CD8-positive, alpha-beta memory T cell (primary cell): ENCODE measurements at regions of chr10 and their contacts with region 1.

Region 1: DNA sequence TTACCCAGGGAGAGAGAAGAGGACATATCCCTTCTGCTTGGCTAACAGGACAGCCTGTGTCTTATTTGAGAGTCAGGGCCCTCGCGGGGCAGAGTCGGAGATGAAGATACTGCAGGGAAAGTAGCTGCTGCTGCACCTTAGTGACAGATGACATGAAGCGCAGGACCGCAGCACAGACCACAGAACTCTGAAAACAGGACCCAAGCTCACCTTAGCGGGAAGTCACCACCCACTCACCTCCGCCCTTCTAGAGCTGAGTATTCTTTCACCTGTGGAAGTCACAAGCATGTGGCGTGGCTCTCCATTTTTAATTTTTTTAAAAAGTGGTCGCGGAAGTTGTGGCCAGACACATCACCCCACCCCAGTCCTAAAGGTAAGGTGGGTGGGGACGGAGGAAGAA is 191.4 kb downstream of the FAM107B start:
- DNase-seq: peak; percentile 64 to 91 (median 87)
- H3K4me3 ChIP-seq: no peak overlapping the region
- H3K4me3 Mint-ChIP-seq: peak overlapping the region; percentile 42 to 85 (median 78)
- H3K27ac ChIP-seq: peak overlapping the region; percentile 41
- H3K27ac Mint-ChIP-seq: peak overlapping the region; percentile 94 to 100 (median 98)
- H3K4me1 ChIP-seq: peaks cover 97% of the 10 kb centered on the region
- H3K4me1 Mint-ChIP-seq: peaks cover 84 to 98% (median 97%) of the 10 kb centered on the region in 3 donors
- H3K27me3 ChIP-seq: no peaks in the 10 kb centered on the region
- H3K27me3 Mint-ChIP-seq: no peaks in the 10 kb centered on the region

Region 2: DNA sequence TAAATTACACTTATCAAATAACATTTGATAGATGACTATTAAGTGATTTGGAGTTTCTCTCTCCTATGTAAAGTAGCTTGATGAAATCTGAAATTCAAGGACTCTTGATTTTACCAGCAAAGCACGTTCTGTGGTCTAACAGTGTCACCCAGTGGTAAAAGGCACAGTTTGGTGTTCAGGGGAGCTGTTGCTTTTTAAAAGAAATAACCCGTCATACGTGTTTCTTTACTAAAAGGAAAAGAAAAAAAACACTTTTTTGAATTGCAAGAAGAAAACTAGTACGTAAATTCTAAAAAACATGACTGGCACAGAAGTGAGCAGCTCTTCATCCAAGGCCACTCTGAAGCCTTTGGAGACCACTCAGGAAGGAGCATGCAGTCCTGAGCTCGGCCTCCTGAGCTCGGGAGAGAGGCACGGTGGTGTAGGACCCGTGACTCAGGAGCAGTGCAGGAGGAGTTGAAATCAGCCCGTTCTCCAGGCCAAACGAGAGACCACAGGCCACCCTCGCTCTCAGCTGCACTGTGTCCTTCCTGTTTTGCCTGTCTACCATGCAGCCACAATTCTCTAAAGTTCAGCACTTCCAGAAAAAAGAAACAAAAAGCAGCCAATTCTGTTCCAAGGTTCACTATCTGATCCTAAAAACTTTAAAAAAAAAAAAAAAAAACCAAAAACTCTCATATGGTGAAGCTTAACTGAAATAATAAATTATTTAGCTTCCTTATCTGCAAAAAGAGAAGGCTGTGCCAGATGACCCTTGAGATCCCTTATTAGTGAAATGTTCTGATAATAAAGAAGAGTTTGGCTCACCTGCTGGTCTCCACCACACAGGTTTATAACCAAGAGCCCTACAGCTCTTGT is 40.0 kb before region 1 on chr10:
- CTCF ChIA-PET with region 1: interaction called, 4 read pairs
- POLR2A ChIA-PET with region 1: interaction called, 10 read pairs
- DNase-seq: peak in 3 of 5 donors; percentile 54 to 74 (median 63)
- H3K4me3 ChIP-seq: peak overlapping the region; percentile 37
- H3K4me3 Mint-ChIP-seq: peak overlapping the region; percentile 21 to 82 (median 76)
- H3K27ac ChIP-seq: peak overlapping the region; percentile 48
- H3K27ac Mint-ChIP-seq: peak overlapping the region; percentile 80 to 96 (median 90)
- H3K4me1 ChIP-seq: peaks cover 45% of the 10 kb centered on the region
- H3K4me1 Mint-ChIP-seq: peaks cover 73 to 95% (median 94%) of the 10 kb centered on the region in 3 donors
- H3K27me3 ChIP-seq: no peaks in the 10 kb centered on the region
- H3K27me3 Mint-ChIP-seq: no peaks in the 10 kb centered on the region

Region 3: DNA sequence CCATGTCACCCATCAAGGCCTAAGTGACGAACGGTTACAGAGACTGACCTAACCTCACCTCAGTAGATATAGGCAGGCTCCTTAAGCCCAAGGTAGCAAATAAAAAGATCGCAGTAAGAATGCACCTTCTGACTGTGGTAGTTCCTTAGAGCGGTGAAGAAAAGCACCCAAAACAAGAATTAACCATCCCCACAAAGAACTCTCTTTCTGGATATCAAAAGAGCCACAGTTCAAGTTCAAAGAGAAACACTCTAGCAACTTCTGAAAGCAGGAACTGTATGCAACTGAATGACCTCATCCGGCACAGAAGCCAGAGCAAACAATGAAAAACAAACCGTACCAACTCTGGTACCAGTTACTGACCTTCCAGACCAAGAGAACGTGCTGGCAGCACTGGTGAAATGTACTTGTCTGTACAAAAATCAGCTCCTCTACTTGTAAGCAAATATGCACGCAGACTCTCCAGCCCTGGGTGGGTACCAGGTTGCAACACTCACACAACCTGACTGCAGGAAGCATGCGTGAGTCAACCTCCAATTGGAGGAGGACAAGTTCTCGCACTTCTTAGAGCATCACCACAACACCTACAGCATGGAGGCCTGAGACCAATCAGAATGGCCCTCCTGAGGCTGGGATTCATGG is 11.3 kb before region 1 on chr10:
- CTCF ChIA-PET with region 1: interaction called, 19 read pairs
- POLR2A ChIA-PET with region 1: interaction called, 21 read pairs
- DNase-seq: peak; percentile 38 to 91 (median 84)
- H3K4me3 ChIP-seq: peak overlapping the region; percentile 70
- H3K4me3 Mint-ChIP-seq: peak overlapping the region; percentile 83 to 96 (median 93)
- H3K27ac ChIP-seq: peak overlapping the region; percentile 85
- H3K27ac Mint-ChIP-seq: peak overlapping the region; percentile 89 to 99 (median 98)
- H3K4me1 ChIP-seq: peaks cover 69% of the 10 kb centered on the region
- H3K4me1 Mint-ChIP-seq: peaks cover 75 to 96% (median 95%) of the 10 kb centered on the region in 3 donors
- H3K27me3 ChIP-seq: no peaks in the 10 kb centered on the region
- H3K27me3 Mint-ChIP-seq: no peaks in the 10 kb centered on the region